ENCODE measurements at regions of chr19 and their contacts with region 1.

Region 1: DNA sequence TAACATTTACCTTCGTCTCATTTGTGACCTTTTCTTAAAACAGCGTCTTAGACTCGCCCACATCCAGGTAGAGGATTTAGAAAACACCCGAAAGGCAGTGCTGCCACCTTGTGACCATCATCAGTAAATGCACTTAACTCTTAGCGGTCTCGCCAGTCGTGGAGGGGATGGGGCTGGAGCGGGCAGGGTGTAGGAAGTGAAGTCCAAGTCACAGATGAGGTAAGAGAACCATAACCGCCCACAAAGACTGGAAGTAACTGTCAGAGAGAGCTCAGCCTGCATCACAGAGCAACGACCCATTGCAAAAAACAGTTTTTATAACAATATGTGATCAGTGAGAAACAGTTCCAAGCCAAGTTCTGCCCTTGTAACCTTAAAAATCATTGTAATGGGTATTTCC is 10.7 kb upstream of the CEACAM3 start:
- DNase-seq: peak; percentile 46 to 82 (median 76)
- ATAC-seq: peak; percentile 96
- H3K4me3 ChIP-seq: no peak overlapping the region
- H3K4me3 Mint-ChIP-seq: peak overlapping the region in 7 of 10 donors; percentile 10 to 66 (median 39)
- H3K27ac ChIP-seq: no peak overlapping the region
- H3K27ac Mint-ChIP-seq: no peak overlapping the region
- H3K4me1 ChIP-seq: peaks cover 10% of the 10 kb centered on the region in 2 donors
- H3K4me1 Mint-ChIP-seq: peaks cover 14 to 19% (median 17%) of the 10 kb centered on the region in 7 donors
- H3K27me3 ChIP-seq: peaks cover 0 to 4% of the 10 kb centered on the region in 2 donors
- H3K27me3 Mint-ChIP-seq: peaks cover 40 to 75% (median 43%) of the 10 kb centered on the region in 5 donors

Region 2: GRCh38 chr19:41641879-41642485 is 143.7 kb before region 1 on chr19:
- CTCF ChIA-PET with region 1: no interaction called
- POLR2A ChIA-PET with region 1: no interaction called
- intact Hi-C with region 1: loop called in 1 of 2 experiments (anchors 5 kb)
- DNase-seq: peak; percentile 37 to 77 (median 65)
- ATAC-seq: peak; percentile 81
- H3K4me3 ChIP-seq: no peak overlapping the region
- H3K4me3 Mint-ChIP-seq: no peak overlapping the region
- H3K27ac ChIP-seq: no peak overlapping the region
- H3K27ac Mint-ChIP-seq: peak overlapping the region in 5 of 9 donors; percentile 0 to 77 (median 44)
- H3K4me1 ChIP-seq: peaks cover 0 to 29% of the 10 kb centered on the region in 2 donors
- H3K4me1 Mint-ChIP-seq: peaks cover 0 to 44% (median 36%) of the 10 kb centered on the region in 7 donors
- H3K27me3 ChIP-seq: no peaks in the 10 kb centered on the region
- H3K27me3 Mint-ChIP-seq: peaks cover 0 to 12% (median 8%) of the 10 kb centered on the region in 5 donors

Region 3: DNA sequence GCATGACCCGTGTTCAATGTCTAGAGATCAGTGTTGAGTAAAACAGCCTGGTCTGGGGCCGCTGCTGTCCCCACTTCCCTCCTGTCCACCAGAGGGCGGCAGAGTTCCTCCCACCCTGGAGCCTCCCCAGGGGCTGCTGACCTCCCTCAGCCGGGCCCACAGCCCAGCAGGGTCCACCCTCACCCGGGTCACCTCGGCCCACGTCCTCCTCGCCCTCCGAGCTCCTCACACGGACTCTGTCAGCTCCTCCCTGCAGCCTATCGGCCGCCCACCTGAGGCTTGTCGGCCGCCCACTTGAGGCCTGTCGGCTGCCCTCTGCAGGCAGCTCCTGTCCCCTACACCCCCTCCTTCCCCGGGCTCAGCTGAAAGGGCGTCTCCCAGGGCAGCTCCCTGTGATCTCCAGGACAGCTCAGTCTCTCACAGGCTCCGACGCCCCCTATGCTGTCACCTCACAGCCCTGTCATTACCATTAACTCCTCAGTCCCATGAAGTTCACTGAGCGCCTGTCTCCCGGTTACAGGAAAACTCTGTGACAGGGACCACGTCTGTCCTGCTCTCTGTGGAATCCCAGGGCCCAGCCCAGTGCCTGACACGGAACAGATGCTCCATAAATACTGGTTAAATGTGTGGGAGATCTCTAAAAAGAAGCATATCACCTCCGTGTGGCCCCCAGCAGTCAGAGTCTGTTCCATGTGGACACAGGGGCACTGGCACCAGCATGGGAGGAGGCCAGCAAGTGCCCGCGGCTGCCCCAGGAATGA is 78.7 kb before region 1 on chr19:
- CTCF ChIA-PET with region 1: interaction called, 3 read pairs
- POLR2A ChIA-PET with region 1: no interaction called
- intact Hi-C with region 1: loop called (anchors 1 kb)
- DNase-seq: peak; percentile 58 to 79 (median 72)
- ATAC-seq: peak; percentile 95
- H3K4me3 ChIP-seq: peak overlapping the region; percentile 56
- H3K4me3 Mint-ChIP-seq: peak overlapping the region; percentile 60 to 81 (median 74)
- H3K27ac ChIP-seq: no peak overlapping the region
- H3K27ac Mint-ChIP-seq: no peak overlapping the region
- H3K4me1 ChIP-seq: no peaks in the 10 kb centered on the region
- H3K4me1 Mint-ChIP-seq: peaks cover 0 to 12% (median 5%) of the 10 kb centered on the region in 7 donors
- H3K27me3 ChIP-seq: no peaks in the 10 kb centered on the region
- H3K27me3 Mint-ChIP-seq: peaks cover 16 to 45% (median 29%) of the 10 kb centered on the region in 5 donors

Region 4: DNA sequence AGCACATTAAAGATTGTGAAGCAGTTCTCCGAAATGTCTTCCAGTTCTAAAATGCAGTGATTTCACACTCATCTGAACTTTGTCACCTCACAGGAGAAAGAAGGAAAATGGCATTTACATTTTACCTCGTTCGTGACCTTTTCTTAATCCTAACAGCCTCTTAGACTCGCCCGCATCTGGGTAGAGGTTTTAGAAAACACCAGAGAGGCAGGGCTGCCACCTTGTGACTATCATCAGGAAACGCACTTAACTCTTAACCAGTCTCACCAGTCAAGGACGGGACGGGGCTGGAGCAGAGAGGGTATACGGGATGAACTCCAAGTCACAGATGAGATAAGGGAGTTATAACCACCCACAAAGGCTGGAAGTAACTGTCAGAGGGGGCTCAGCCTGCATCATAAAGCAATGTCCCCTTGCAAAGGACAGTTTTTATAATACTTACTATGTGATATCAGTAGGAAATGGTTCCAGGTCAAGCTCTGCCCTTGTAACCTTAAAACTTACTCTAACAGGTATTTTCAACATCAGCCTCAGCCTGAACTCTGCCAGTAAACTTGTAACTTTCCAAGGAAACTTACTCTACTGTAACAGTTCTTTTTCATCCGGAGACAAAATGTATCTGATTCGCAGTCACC is 38.9 kb before region 1 on chr19:
- CTCF ChIA-PET with region 1: interaction called, 149 read pairs
- POLR2A ChIA-PET with region 1: no interaction called
- intact Hi-C with region 1: no loop called
- DNase-seq: peak in 8 of 9 donors; percentile 27 to 62 (median 48)
- ATAC-seq: peak; percentile 82
- H3K4me3 ChIP-seq: no peak overlapping the region
- H3K4me3 Mint-ChIP-seq: no peak overlapping the region
- H3K27ac ChIP-seq: no peak overlapping the region
- H3K27ac Mint-ChIP-seq: no peak overlapping the region
- H3K4me1 ChIP-seq: no peaks in the 10 kb centered on the region
- H3K4me1 Mint-ChIP-seq: peaks cover 0 to 10% (median 0%) of the 10 kb centered on the region in 7 donors
- H3K27me3 ChIP-seq: peaks cover 0 to 3% of the 10 kb centered on the region in 2 donors
- H3K27me3 Mint-ChIP-seq: peaks cover 45 to 71% (median 46%) of the 10 kb centered on the region in 5 donors

Region 5: DNA sequence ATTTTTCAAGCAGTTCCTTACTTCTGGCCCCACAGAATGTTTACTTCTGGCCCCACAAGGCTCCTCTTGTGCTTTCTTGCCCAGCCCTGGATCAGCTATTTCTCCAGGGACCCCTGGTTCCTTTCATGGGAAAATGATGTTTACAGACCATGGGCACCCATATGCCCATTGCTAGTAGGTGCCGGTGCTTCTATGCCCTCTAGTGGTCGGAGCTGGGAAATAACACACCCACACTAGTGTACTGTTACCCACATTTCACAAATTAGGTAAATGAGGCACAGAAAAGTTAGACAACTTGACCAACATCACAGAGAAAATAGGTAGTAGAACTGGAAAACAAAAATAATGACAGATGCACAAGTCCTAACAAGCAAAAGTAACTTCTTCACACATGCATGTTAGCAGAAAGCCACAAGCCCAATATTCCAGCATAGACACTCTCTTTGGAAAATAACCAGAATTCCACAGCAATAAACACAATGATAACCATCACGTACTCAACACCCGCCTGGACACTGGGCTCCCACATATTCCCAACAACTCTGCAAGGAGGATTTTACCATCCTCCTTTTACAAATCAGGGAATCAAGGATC is 31.6 kb before region 1 on chr19:
- CTCF ChIA-PET with region 1: interaction called, 149 read pairs
- POLR2A ChIA-PET with region 1: interaction called, 16 read pairs
- intact Hi-C with region 1: loop called (anchors 1 kb)
- DNase-seq: peak; percentile 43 to 76 (median 63)
- ATAC-seq: peak; percentile 95
- H3K4me3 ChIP-seq: no peak overlapping the region
- H3K4me3 Mint-ChIP-seq: no peak overlapping the region
- H3K27ac ChIP-seq: no peak overlapping the region
- H3K27ac Mint-ChIP-seq: peak overlapping the region in 2 of 9 donors; percentile 5 to 85
- H3K4me1 ChIP-seq: no peaks in the 10 kb centered on the region
- H3K4me1 Mint-ChIP-seq: peaks cover 4 to 6% (median 5%) of the 10 kb centered on the region in 7 donors
- H3K27me3 ChIP-seq: no peaks in the 10 kb centered on the region
- H3K27me3 Mint-ChIP-seq: peaks cover 20 to 57% (median 30%) of the 10 kb centered on the region in 5 donors

Region 6: DNA sequence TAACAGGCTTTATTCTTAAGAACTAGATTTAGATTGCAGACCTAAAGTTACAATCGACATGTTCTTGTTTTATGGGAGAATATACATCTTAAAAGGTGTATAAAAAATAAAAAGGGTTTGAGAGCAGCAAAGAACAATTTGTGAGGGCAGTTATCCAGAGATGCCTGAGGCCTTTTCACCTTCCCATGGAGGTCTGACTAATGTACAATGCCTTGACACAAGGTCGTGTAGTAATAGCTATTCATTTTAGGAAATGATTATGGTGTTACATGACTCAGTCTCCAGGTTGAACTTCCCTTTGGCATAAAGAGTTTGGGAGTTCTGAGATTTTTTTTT is 10.3 kb before region 1 on chr19:
- CTCF ChIA-PET with region 1: interaction called, 22 read pairs
- POLR2A ChIA-PET with region 1: interaction called, 4 read pairs
- intact Hi-C with region 1: loop called in 1 of 2 experiments (anchors 1 kb)
- DNase-seq: no peak
- ATAC-seq: no peak
- H3K4me3 ChIP-seq: no peak overlapping the region
- H3K4me3 Mint-ChIP-seq: peak overlapping the region in 7 of 10 donors; percentile 71 to 88 (median 81)
- H3K27ac ChIP-seq: no peak overlapping the region
- H3K27ac Mint-ChIP-seq: peak overlapping the region in 1 of 9 donors; percentile 30
- H3K4me1 ChIP-seq: peaks cover 12 to 36% of the 10 kb centered on the region in 2 donors
- H3K4me1 Mint-ChIP-seq: peaks cover 29 to 48% (median 45%) of the 10 kb centered on the region in 7 donors
- H3K27me3 ChIP-seq: peaks cover 0 to 9% of the 10 kb centered on the region in 2 donors
- H3K27me3 Mint-ChIP-seq: peaks cover 33 to 92% (median 51%) of the 10 kb centered on the region in 5 donors